ENCODE measurements at regions of chr7 and their contacts with region 1.

Region 1: DNA sequence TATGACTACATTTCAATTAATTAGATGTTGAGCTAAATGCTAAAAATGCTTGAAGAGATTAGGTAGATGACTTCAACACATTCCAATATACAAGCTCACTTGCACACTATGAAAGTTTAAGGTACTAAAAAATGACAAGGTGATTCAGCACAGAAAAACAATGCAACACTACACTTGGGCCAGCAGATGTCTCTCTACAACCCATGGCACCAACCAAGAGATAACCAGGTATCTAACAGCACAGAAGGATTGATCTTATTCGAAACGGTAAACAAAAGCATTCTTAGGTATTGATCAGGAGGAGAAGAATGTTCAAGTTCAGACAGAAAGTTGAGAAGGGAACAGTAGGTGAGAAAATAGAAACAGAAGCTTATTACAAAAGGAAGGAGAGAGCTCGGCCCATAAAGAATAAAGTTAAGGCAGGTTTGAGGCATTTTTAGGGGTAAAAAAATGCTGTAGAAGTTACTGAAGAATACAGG is 248.2 kb upstream of the KLF14 start:
- DNase-seq: peak; percentile 48
- H3K4me3 Mint-ChIP-seq: no peak overlapping the region
- H3K27ac Mint-ChIP-seq: no peak overlapping the region
- H3K4me1 Mint-ChIP-seq: peaks cover 59% of the 10 kb centered on the region
- H3K27me3 Mint-ChIP-seq: no peaks in the 10 kb centered on the region

Region 2: DNA sequence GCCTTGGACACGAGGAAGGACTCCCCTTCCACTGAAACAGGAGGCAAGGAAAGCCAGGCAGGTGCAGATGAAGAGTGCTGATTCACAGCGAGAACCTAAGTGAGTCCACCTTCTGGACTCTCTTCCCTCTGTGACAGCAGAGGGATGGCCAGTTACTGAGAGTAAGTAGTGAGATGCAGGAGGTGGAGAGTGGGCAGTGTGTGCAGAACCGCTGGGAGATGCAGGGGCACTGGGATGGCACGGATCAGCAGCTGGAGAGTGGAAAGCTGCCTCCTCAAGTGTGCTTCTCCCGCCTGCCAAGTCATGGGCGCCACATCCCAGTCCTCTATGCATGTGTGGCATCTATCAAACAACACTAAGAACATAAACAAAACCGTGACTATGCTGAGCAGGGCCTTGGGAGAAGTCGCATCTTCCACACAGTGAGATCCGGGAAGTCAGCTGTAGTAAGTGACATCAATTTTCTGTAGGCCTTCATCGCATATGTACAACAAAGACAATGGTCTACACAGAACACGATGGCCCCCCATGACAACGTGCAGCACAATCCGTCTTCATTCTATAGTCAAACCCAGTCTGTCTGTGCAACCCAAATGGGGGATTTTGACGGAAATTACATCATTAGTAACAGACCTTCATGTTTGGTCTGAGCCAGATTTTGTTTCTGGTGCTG is 30.8 kb before region 1 on chr7:
- CTCF ChIA-PET with region 1: interaction called, 10 read pairs
- POLR2A ChIA-PET with region 1: interaction called, 59 read pairs
- intact Hi-C with region 1: no loop called
- DNase-seq: peak; percentile 56
- H3K4me3 Mint-ChIP-seq: no peak overlapping the region
- H3K27ac Mint-ChIP-seq: no peak overlapping the region
- H3K4me1 Mint-ChIP-seq: peaks cover 55% of the 10 kb centered on the region
- H3K27me3 Mint-ChIP-seq: no peaks in the 10 kb centered on the region

Region 3: DNA sequence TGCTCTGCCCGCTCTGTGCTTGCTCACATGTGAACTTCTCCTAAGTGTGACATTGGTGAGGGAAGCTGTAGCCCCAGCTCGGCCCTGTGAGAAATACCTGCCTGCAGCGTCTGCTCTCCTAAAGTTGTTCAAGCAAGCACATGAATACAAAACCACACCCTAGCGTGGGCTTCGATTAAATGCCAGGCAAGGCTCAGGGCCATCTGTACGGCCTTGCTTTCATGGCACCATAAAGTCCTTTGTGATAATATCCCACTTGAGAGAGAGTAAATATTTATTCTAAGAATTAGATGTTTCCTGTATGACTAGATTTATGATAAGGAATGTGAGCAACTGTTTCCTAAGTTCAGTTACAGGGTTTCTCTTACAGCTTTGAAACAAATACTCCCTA is 14.6 kb after region 1 on chr7:
- CTCF ChIA-PET with region 1: interaction called, 76 read pairs
- POLR2A ChIA-PET with region 1: interaction called, 13 read pairs
- intact Hi-C with region 1: loop called (anchors 1 kb)
- DNase-seq: peak; percentile 73
- H3K4me3 Mint-ChIP-seq: peak overlapping the region; percentile 55
- H3K27ac Mint-ChIP-seq: peak overlapping the region; percentile 94
- H3K4me1 Mint-ChIP-seq: peaks cover 90% of the 10 kb centered on the region
- H3K27me3 Mint-ChIP-seq: no peaks in the 10 kb centered on the region

Region 4: DNA sequence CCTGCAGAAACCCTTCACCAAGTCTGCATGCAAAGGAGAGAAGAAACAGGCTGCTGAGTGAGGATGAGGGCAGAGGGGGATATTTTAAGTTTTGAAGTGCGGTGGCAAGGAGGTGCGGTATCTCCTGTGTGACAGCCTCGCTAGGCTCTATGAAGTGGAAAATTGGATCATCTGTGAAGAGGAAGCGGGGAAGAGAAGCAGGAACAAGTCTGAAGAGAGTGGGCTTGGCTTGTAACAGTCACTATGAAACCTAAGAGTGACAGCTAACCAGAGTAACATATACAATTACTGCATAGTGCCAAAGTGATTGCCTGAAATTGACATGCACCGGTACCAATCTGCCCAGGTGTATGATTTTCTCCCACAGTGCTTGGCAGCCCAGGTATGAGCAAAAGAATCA is 39.3 kb after region 1 on chr7:
- CTCF ChIA-PET with region 1: interaction called, 27 read pairs
- POLR2A ChIA-PET with region 1: interaction called, 3 read pairs
- intact Hi-C with region 1: no loop called
- DNase-seq: peak; percentile 37
- H3K4me3 Mint-ChIP-seq: peak overlapping the region; percentile 64
- H3K27ac Mint-ChIP-seq: peak overlapping the region; percentile 88
- H3K4me1 Mint-ChIP-seq: peaks cover 80% of the 10 kb centered on the region
- H3K27me3 Mint-ChIP-seq: no peaks in the 10 kb centered on the region

Region 5: DNA sequence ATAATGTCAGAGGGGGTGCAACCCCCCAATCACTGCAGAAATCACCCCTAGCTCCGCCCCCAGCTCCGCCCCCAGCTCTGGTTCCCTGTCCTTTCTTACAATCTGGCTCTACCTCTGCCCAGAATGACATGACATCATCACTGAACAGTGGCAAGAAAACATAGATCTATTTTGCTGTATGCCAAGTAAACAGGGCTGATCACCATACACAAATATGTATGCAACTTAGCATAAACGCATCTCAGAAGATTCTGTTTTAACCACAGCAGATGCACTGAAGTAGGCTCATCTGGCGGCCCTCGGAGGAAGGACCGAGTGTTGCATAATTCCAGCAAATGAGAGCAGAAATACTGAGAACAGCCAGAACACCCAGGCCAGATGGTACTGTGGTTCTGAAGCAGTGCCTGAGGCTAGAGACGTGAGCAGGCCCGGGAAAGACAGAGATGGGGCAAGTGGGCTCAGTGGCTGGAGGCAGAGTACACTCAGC is 45.1 kb after region 1 on chr7:
- CTCF ChIA-PET with region 1: interaction called, 24 read pairs
- POLR2A ChIA-PET with region 1: interaction called, 3 read pairs
- intact Hi-C with region 1: no loop called
- DNase-seq: peak; percentile 66
- H3K4me3 Mint-ChIP-seq: peak overlapping the region; percentile 36
- H3K27ac Mint-ChIP-seq: peak overlapping the region; percentile 79
- H3K4me1 Mint-ChIP-seq: peaks cover 87% of the 10 kb centered on the region
- H3K27me3 Mint-ChIP-seq: no peaks in the 10 kb centered on the region

Measured in activated CD4-positive, alpha-beta memory T cell treated with anti-CD3 and anti-CD28 coated beads for 36 hours (primary cell).